GM12878 (cell line): ENCODE measurements at regions of chr4 and their contacts with region 1.

Region 1: DNA sequence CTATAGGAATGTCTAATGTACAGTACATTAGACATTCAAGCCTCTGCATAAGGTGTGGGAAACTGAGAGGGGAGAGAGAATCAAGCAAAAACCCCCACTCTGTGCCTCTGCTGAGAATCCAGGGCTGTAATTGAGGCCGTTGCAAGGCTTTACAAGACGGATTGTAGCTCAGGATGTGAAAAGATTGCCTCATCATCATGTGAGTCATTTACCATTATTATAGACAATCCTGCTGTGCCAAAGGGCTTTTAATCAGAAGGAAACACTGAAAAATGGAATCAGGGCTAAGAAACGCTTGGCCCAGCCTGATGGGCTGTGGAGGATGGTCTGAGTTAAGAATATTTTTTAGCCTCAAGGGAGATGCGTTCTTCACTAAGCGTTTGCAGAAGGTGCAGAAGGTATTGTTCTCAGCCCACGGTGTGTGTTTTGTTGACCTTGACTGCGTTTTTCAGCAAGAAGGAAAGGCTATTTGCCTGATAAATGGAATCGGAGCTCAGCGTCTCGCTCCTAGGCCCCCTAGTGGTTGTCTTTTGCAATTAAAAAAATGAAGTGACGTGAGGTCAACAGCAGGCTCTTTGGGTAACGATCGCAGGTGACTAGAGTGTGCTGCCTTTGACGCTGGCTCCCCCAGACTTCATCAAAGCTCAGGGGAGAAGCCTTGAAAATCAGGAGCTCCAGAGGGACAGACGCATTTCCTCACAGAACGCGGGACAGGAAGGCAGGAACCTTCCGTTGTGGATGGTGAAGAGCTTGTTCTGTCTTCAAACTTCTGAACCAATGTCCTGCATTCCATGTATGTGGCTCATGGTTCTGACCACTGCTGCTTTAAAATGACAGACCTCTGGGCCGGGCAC is 18.1 kb upstream of the CHRNA9 start:
- DNase-seq: peak; percentile 78
- ATAC-seq: peak; percentile 86
- H3K4me3 ChIP-seq: peak overlapping the region; percentile 62
- H3K27ac ChIP-seq: peak overlapping the region; percentile 75
- H3K4me1 ChIP-seq: peaks cover 10% of the 10 kb centered on the region
- H3K27me3 ChIP-seq: no peaks in the 10 kb centered on the region
- CTCF ChIP-seq: peak; percentile 75 to 88 (median 82)
- EP300 ChIP-seq: no peak
- POLR2A ChIP-seq: 0 out of 2 replicates have a peak, but pooled peaks have one; percentile 32
- RAD21 ChIP-seq: peak; percentile 74

Region 2: GRCh38 chr4:40173470-40173875 is 143.5 kb before region 1 on chr4:
- CTCF ChIA-PET with region 1: interaction called, 3 read pairs
- POLR2A ChIA-PET with region 1: interaction called, 3 read pairs
- RAD21 ChIA-PET with region 1: interaction called, 10 read pairs
- SMC1A ChIA-PET with region 1: interaction called, 5 read pairs
- in situ Hi-C with region 1: no loop called
- intact Hi-C with region 1: no loop called
- DNase-seq: no peak
- ATAC-seq: peak; percentile 82
- H3K4me3 ChIP-seq: no peak overlapping the region
- H3K27ac ChIP-seq: peak overlapping the region; percentile 45
- H3K4me1 ChIP-seq: peaks cover 21% of the 10 kb centered on the region
- H3K27me3 ChIP-seq: no peaks in the 10 kb centered on the region
- CTCF ChIP-seq: no peak
- EP300 ChIP-seq: no peak
- POLR2A ChIP-seq: peak; percentile 47
- RAD21 ChIP-seq: no peak

Region 3: DNA sequence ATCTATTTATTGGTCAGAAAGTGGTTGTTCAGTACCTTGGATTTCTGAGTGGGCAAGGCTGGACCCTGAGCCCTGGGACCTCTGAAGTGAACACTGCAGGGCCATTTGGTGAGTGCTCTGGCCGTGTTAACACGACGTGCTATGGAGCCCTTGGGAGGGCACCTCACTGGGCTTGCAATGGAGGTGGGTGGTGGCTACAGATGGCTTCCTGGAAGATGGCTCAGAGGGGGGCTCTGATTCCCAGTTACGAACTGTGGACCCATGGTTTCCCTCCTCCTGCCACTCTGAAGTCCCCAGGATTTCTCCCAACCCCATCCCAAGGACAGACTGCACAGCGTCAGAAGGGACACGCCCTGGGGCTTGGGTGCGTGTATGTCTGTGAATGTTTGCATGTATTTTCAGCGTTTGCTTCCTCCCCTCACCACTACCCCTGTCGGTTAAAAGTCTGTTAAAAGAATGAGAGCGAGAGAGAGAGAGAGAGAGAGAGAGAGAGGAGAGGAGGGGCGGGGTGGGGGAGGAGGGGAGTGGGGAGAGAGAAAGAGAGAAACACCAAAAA is 123.9 kb before region 1 on chr4:
- CTCF ChIA-PET with region 1: interaction called, 5 read pairs
- POLR2A ChIA-PET with region 1: interaction called, 6 read pairs
- RAD21 ChIA-PET with region 1: interaction called, 356 read pairs
- SMC1A ChIA-PET with region 1: interaction called, 374 read pairs
- in situ Hi-C with region 1: no loop called
- intact Hi-C with region 1: no loop called
- DNase-seq: no peak
- ATAC-seq: peak; percentile 40
- H3K4me3 ChIP-seq: peak overlapping the region; percentile 88
- H3K27ac ChIP-seq: peak overlapping the region; percentile 92
- H3K4me1 ChIP-seq: peaks cover 9% of the 10 kb centered on the region
- H3K27me3 ChIP-seq: no peaks in the 10 kb centered on the region
- CTCF ChIP-seq: 0 out of 6 replicates have a peak, but pooled peaks of 1 of the 3 experiments have one; percentile 3
- EP300 ChIP-seq: 0 out of 4 replicates have a peak, but pooled peaks of 1 of the 2 experiments have one; percentile 25
- POLR2A ChIP-seq: peak; percentile 81
- RAD21 ChIP-seq: peak; percentile 17; the same call in 1 of the 2 replicates

Region 4: DNA sequence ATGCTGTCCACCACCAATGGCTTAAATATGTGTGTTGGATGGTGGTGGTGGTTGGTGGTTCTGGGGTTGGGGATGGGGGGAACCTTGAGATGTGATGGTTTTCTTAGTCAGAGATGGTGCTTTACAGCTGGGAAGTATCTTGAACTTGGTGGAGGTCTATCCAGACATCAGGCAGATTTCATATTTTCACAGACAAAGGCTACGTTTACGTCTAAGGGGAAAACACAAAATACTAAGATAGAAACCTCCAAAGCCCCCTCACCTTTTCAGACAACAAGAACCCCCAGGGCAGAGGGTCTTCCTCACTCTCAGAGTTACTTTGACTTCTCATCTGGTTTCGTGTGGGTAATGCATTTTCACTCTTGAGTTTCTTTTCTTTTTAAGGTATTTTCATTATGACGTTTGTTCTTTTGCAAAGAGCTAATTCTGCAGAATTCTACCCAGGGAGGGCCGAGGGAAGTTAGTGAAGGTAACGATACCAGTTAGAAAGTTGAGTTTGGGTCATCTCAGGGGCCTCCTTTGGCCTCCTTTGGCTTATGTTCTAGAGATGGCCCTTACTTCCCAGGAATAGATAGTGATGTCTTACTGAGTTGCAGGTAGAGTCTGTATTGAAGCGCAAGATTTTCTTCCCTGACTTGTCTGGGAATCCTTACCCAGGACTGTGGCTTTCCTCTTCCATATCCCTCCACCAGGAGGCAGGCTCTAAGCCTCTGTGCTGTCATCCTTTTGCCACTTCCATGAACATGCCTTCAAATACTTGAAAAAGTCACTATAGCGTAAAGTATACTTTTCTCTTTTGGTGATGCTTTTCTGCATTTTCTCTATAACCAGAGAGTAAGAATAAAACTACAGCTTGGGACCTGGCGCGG is 88.3 kb before region 1 on chr4:
- CTCF ChIA-PET with region 1: interaction called, 24 read pairs
- POLR2A ChIA-PET with region 1: no interaction called
- RAD21 ChIA-PET with region 1: interaction called, 10 read pairs
- SMC1A ChIA-PET with region 1: interaction called, 10 read pairs
- in situ Hi-C with region 1: no loop called
- intact Hi-C with region 1: no loop called
- DNase-seq: peak; percentile 77
- ATAC-seq: peak; percentile 56
- H3K4me3 ChIP-seq: peak overlapping the region; percentile 13; the same call in 1 of the 2 replicates
- H3K27ac ChIP-seq: peak overlapping the region; percentile 84
- H3K4me1 ChIP-seq: peaks cover 59% of the 10 kb centered on the region
- H3K27me3 ChIP-seq: no peaks in the 10 kb centered on the region
- CTCF ChIP-seq: peak; percentile 28 to 65 (median 45); a peak in 5 of 6 replicates
- EP300 ChIP-seq: peak in 1 of 2 experiments; percentile 66; a peak in 3 of 4 replicates
- POLR2A ChIP-seq: no peak
- RAD21 ChIP-seq: peak; percentile 44

Region 5: DNA sequence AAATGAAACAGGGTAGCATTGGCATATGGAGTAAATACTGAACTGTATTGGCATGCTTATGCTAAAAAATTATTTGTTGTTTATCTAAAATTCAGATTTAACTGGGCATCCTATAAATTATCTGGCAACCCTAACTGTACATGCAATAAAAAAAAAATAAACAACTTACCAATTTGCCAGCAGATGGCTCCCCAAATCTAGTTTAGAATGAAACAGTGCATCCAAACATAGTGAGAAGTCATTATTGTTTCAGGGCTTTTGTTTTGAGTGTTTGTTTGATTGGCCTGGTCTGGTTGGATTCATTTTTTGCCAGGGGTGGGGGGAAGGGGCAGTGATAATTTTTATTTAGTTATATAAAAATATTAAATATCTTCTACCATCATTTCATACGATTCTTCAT is 419.9 kb after region 1 on chr4:
- CTCF ChIA-PET with region 1: interaction called, 10 read pairs
- POLR2A ChIA-PET with region 1: interaction called, 5 read pairs
- RAD21 ChIA-PET with region 1: interaction called, 8 read pairs
- SMC1A ChIA-PET with region 1: no interaction called
- in situ Hi-C with region 1: no loop called
- intact Hi-C with region 1: no loop called
- DNase-seq: no peak
- ATAC-seq: peak; percentile 84
- H3K4me3 ChIP-seq: no peak overlapping the region
- H3K27ac ChIP-seq: no peak overlapping the region
- H3K4me1 ChIP-seq: no peaks in the 10 kb centered on the region
- H3K27me3 ChIP-seq: no peaks in the 10 kb centered on the region
- CTCF ChIP-seq: peak; percentile 43 to 68 (median 47); a peak in 5 of 6 replicates
- EP300 ChIP-seq: no peak
- POLR2A ChIP-seq: no peak
- RAD21 ChIP-seq: peak; percentile 94